ENCODE measurements at regions of chr19 and their contacts with region 1.

Region 1: DNA sequence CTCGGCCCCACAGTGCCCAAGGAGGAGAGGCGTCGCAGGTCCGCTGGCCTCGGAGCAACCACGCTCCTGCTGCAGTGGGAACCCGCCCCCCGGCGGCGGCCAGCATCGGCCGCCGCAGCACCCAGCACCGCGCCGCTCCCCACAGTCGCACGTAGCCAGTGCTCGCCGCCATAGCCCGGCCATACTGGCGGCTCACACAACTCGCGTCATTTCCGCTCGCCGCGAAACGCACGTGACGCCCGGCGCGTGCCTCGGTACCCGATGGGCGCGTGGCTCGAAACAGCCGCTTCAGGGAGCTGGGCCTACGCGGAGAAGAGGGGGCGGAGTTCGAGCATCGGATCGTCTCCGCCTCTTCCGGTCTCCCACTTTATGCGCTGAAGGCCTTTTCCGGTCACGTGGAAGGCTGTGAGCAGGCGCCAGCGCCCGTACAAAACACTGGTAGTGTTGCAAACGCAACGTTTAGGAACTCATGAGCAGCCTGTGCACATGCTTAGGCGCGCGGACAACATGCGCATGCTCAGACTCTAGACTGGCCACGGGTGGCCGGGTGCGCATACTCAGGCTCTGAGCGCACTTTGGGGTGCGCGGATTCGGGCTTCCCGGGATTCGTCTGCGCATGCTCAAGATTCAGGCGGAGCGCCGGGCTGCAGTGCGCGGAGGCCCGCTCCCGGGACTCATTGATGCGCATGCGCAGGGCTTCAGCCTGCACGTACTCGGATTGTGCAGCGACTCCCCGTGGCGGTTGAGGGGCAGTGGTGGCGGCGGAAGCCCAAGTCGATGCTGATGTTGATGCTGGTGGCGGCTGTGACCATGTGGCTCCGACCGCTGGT is at the starts of genes CATSPERD and LONP1:
- DNase-seq: peak; percentile 98
- total RNA-seq, gene CATSPERD: not detected
- total RNA-seq, gene LONP1: 70.8 TPM

Region 2: GRCh38 chr19:5651361-5651760 is 68.8 kb before region 1 on chr19:
- intact Hi-C with region 1: no loop called
- DNase-seq: no peak

Region 3: GRCh38 chr19:5690125-5690954 is 29.8 kb before region 1 on chr19 and contains the start of gene RPL36:
- intact Hi-C with region 1: loop called (anchors 1 kb)
- DNase-seq: peak; percentile 99
- total RNA-seq, gene RPL36: 337 TPM

Region 4: DNA sequence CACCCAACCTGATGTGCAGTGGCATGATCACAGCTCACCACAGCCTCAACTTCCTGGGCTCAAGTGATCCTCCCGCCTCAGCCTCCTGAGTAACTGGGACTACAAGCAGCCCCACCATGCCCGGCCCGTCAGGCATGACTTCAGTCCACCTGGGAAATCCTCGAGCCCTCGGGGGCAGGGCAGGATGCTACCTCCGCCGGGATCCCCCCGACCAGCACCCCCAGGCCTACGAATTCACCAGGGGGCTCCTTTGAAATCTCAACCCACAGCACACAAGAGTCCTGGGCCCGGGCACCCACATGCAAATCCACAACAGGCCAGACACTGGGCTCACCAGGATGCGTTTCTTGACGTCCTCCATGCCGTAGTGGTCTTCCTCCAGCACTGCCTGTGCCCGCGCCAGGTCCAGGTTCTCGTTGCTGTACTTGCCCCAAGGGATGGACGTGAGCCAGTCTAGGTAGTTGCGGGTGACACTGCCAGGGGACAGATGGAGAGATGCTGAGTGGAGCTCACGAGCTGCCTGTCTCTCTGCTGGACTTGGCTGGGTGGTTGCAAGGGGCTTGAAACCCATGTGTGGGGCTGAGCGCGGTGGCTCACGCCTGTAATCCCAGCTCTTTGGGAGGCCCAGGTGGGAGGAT is 19.6 kb before region 1 on chr19:
- intact Hi-C with region 1: no loop called
- DNase-seq: no peak

Region 5: DNA sequence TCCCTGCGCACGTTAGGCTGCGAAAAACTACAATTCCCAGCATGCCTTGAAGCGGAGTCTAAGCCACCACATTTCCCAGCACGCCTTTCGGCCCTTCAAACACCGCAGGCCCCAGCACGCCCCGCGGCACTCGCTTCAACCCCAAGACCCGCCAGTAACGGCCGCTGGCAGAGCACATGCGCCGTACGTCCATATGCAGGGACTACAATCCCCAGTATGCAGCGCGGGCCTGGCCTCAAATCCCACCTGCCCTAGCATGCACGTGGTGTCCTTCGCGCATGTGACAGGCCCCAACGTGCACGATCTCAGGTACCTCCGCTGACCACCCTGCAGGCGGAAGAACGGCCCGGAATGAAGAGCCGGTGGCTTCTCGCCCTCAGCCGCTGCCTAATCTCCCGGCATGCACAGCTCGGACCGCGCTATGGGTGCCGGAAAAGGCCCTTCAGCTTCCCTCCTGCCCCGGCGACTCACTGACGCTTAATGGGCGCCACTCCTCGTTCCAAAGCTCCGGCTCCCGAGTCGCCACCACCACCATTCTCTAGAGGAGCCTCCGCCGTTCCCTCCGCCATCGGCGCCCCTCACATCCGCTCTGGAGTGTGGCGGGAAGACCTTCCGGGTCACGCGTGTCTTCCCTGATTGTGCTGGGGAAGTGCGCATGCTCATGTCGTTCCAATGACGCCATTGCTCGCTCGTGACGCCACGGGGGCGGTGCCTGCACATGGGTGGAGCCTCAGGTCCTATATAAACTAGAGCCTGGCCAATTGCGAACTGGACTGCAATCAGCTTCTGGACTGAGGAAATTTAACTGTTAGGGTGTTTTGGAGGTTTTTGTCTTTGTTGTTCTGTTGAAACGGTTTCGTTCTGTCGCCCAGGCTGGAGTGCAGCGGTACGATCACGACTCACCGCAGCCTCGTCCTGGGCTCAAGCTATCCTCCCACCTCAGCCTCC is 70.7 kb after region 1 on chr19 and contains the start of gene DUS3L:
- intact Hi-C with region 1: loop called (anchors 5 kb)
- DNase-seq: peak; percentile 98
- total RNA-seq, gene DUS3L: 21.6 TPM